ENCODE measurements at regions of chr6 and their contacts with region 1.

Region 1: DNA sequence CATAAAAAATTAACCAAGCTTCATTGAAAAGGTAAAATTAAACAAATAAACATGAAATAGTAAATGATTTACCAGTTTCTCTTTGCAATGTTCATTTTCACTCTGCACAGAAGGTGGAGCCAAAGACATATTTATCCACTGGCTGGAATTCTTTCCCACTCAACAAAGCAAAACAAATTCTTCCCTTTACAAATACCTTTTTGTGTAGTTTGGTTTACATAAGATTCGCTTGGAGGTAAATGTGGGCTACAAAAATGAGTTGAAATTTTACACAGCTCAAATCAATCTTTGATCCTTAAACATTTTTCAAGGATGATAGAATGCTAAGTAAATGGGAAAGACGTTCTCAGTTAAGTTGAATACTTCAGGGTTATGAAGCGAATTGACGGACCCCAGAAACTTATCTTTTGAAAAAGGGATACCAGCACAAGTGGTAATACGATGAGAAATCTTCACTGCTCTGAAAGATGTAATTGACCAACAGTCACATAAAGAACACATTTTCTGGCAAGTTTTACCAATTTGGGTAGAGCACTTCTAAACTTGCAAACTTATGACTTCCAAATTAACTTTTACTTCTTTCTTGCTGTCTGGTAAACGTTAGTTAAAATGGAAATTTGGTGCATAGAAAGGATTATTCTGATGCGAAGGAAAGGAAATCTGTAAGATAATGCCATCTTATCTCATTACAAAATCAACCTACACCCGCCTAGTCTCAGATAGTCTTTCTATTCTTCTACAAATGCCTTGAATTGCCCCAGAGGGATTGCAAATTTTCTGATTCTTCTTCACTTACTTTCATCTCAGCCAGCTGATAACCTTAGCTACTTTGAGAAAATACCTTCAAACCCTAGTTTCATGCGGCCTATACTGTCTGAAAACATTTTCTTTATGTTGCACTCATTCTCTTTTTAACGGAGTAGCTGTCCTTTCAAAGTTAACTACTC is 4.7 kb upstream of the GJA1 start:
- DNase-seq: no peak
- ATAC-seq: no peak
- H3K4me3 ChIP-seq: no peak overlapping the region
- H3K4me3 Mint-ChIP-seq: no peak overlapping the region
- H3K27ac ChIP-seq: no peak overlapping the region
- H3K27ac Mint-ChIP-seq: no peak overlapping the region
- H3K4me1 ChIP-seq: no peaks in the 10 kb centered on the region
- H3K4me1 Mint-ChIP-seq: peaks cover 3% of the 10 kb centered on the region
- H3K27me3 ChIP-seq: no peaks in the 10 kb centered on the region
- H3K27me3 Mint-ChIP-seq: peaks cover 9% of the 10 kb centered on the region
- CTCF ChIP-seq: no peak

Region 2: DNA sequence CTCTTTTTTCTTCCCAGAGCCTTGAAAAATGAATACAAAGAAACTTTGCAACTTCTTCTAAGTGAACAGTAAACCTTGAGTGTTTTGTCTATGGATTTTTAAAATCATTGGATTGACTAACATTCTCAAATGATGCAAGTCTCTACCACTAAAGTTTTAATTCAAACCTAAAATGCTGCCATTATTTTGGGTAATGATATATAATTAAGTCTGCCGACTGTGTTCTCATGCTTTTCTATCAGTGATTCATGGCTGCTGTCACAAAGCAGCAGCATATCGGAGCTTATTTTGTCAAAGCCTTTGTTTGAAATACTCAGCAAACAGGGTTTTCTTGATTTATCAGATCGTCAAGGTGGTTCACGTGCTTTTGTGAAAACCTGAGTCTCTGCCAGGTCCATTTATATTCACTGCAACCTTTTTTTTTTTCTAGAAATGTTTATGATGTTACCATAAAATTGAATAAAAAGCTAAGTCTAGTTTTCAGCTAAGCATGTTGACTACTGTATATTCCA is 100.9 kb after region 1 on chr6:
- CTCF ChIA-PET with region 1: no interaction called
- POLR2A ChIA-PET with region 1: no interaction called
- intact Hi-C with region 1: no loop called
- DNase-seq: no peak
- ATAC-seq: no peak
- H3K4me3 ChIP-seq: no peak overlapping the region
- H3K4me3 Mint-ChIP-seq: no peak overlapping the region
- H3K27ac ChIP-seq: no peak overlapping the region
- H3K27ac Mint-ChIP-seq: no peak overlapping the region
- H3K4me1 ChIP-seq: no peaks in the 10 kb centered on the region
- H3K4me1 Mint-ChIP-seq: no peaks in the 10 kb centered on the region
- H3K27me3 ChIP-seq: no peaks in the 10 kb centered on the region
- H3K27me3 Mint-ChIP-seq: no peaks in the 10 kb centered on the region
- CTCF ChIP-seq: no peak

Region 3: GRCh38 chr6:121849477-121849876 is 418.7 kb after region 1 on chr6:
- CTCF ChIA-PET with region 1: interaction called, 9 read pairs
- POLR2A ChIA-PET with region 1: no interaction called
- intact Hi-C with region 1: loop called in 1 of 2 experiments (anchors 1 kb)
- DNase-seq: peak in 3 of 9 experiments; percentile 11 to 51 (median 15)
- ATAC-seq: no peak
- H3K4me3 ChIP-seq: no peak overlapping the region
- H3K4me3 Mint-ChIP-seq: no peak overlapping the region
- H3K27ac ChIP-seq: no peak overlapping the region
- H3K27ac Mint-ChIP-seq: no peak overlapping the region
- H3K4me1 ChIP-seq: no peaks in the 10 kb centered on the region
- H3K4me1 Mint-ChIP-seq: peaks cover 7% of the 10 kb centered on the region
- H3K27me3 ChIP-seq: no peaks in the 10 kb centered on the region
- H3K27me3 Mint-ChIP-seq: peaks cover 2% of the 10 kb centered on the region
- CTCF ChIP-seq: no peak